ENCODE measurements at regions of chr15 and their contacts with region 1.

Region 1: DNA sequence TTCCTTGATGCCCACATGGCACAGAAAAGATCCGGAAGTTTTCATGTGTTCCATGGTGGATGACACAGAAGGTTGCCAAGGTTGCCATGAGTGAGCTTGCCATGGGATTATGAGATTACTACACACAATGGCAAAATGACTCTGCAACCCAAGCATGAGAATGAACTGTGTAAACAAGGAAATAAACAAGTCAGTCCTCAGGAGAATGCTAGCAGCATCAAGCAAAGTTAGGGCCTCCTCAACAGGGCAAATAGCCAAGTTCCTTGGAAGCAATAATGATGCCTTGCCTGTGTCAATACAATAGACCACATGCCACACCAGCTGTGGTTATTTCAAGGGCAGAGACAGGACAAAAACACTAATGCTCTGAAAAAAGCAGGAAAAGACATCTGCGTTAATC is 41.8 kb downstream of the AQR start:
- DNase-seq: no peak
- ATAC-seq: no peak

Region 2: GRCh38 chr15:34621675-34622074 is 306.1 kb before region 1 on chr15:
- intact Hi-C with region 1: loop called (anchors 2 kb)
- DNase-seq: no peak
- ATAC-seq: no peak

Region 3: GRCh38 chr15:34708422-34708821 is 219.3 kb before region 1 on chr15:
- intact Hi-C with region 1: loop called (anchors 5 kb)
- DNase-seq: no peak
- ATAC-seq: peak; percentile 63